Activated CD8-positive, alpha-beta memory T cell treated with anti-CD3 and anti-CD28 coated beads, Interleukin-2, amount 10 ng/mL, durations not matched to agents 7 days and 5 days (primary cell): ENCODE measurements at regions of chr21 and their contacts with region 1.

Region 1: DNA sequence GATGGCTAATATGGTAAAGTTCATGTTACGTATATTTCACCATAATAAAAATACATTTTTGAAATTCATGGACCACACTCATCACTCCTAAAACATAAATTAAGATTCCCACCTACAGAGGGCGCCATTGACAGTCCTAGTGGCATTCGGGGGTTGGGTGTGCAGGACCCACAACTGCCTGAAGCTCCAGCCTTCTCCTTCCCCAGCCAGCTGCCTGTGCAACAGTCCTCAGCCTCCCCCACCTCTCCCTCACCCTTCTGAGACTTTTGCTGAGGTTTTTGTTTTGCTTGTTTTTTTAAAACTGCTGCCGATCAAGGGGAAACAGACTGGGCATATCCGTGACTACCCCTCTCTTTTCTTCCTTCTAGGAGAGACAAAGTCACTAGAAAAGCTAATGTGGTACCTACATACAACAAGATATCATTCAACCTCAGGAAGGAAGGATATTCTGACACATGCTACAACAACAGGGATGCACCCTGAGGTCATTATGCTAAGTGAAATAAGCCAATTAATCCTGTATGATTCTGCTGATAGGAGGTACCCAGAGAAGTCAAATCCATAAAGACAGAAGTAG is 9.2 kb upstream of the EVA1C start:
- DNase-seq: peak; percentile 71
- ATAC-seq: peak; percentile 83
- H3K4me3 Mint-ChIP-seq: no peak overlapping the region
- H3K27ac Mint-ChIP-seq: peak overlapping the region; percentile 16
- H3K4me1 Mint-ChIP-seq: peaks cover 26% of the 10 kb centered on the region
- H3K27me3 Mint-ChIP-seq: peaks cover 6% of the 10 kb centered on the region

Region 2: GRCh38 chr21:32371913-32372314 is 31.4 kb before region 1 on chr21:
- CTCF ChIA-PET with region 1: no interaction called
- DNase-seq: no peak
- ATAC-seq: peak; percentile 58
- H3K4me3 Mint-ChIP-seq: no peak overlapping the region
- H3K27ac Mint-ChIP-seq: peak overlapping the region; percentile 69
- H3K4me1 Mint-ChIP-seq: peaks cover 15% of the 10 kb centered on the region
- H3K27me3 Mint-ChIP-seq: no peaks in the 10 kb centered on the region

Region 3: GRCh38 chr21:32392880-32393676 is 10.2 kb before region 1 on chr21 and contains the start of gene URB1:
- CTCF ChIA-PET with region 1: interaction called, 21 read pairs
- DNase-seq: peak; percentile 95
- ATAC-seq: peak; percentile 98
- H3K4me3 Mint-ChIP-seq: peak within 1 kb of the TSS; percentile 81
- H3K27ac Mint-ChIP-seq: peak within 1 kb of the TSS; percentile 87
- H3K4me1 Mint-ChIP-seq: peaks cover 49% of the 10 kb centered on the region
- H3K27me3 Mint-ChIP-seq: no peaks in the 10 kb centered on the region
- total RNA-seq, gene URB1: 17.5 to 28.3 TPM

Region 4: DNA sequence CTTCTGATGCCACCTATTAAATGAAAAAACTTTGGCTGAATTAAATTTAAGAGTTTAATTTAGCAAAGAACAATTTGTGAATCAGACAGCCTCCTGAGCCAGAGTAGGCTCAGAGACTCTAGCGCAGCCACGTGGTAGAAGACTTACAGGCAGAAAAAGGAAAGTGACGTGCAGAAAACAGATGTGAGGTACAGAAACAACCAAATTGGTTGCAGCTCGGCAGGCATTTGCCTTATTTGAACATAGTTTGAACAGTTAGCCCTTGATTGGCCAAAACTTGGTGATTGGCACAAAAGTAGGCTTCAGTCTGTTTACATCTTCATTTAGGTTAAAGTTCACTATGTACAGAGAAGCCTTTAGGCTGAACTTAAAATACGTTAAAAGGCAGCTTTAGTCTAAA is 159.1 kb after region 1 on chr21:
- CTCF ChIA-PET with region 1: interaction called, 12 read pairs
- DNase-seq: no peak
- ATAC-seq: no peak
- H3K4me3 Mint-ChIP-seq: no peak overlapping the region
- H3K27ac Mint-ChIP-seq: no peak overlapping the region
- H3K4me1 Mint-ChIP-seq: peaks cover 4% of the 10 kb centered on the region
- H3K27me3 Mint-ChIP-seq: peaks cover 2% of the 10 kb centered on the region

Region 5: GRCh38 chr21:32569261-32570230 is 166.3 kb after region 1 on chr21:
- CTCF ChIA-PET with region 1: interaction called, 66 read pairs
- DNase-seq: peak; percentile 90
- ATAC-seq: peak; percentile 94
- H3K4me3 Mint-ChIP-seq: peak overlapping the region; percentile 85
- H3K27ac Mint-ChIP-seq: peak overlapping the region; percentile 86
- H3K4me1 Mint-ChIP-seq: peaks cover 22% of the 10 kb centered on the region
- H3K27me3 Mint-ChIP-seq: peaks cover 2% of the 10 kb centered on the region